T-cell (primary cell): ENCODE measurements at regions of chr10 and their contacts with region 1.

Region 1: GRCh38 chr10:62050893-62051433 is 149.5 kb downstream of the ARID5B start:
- DNase-seq: peak; percentile 18 to 86 (median 73)
- ATAC-seq: peak; percentile 68 to 87 (median 74)
- H3K4me3 ChIP-seq: peak overlapping the region in 1 of 2 donors; percentile 50
- H3K4me3 Mint-ChIP-seq: peak overlapping the region; percentile 90 to 93 (median 91)
- H3K27ac ChIP-seq: peak overlapping the region; percentile 90
- H3K27ac Mint-ChIP-seq: peak overlapping the region; percentile 99 to 100
- H3K4me1 ChIP-seq: peaks cover 48 to 57% of the 10 kb centered on the region in 2 experiments
- H3K4me1 Mint-ChIP-seq: peaks cover 94 to 99% (median 98%) of the 10 kb centered on the region in 3 donors
- H3K27me3 ChIP-seq: no peaks in the 10 kb centered on the region
- H3K27me3 Mint-ChIP-seq: no peaks in the 10 kb centered on the region

Region 2: DNA sequence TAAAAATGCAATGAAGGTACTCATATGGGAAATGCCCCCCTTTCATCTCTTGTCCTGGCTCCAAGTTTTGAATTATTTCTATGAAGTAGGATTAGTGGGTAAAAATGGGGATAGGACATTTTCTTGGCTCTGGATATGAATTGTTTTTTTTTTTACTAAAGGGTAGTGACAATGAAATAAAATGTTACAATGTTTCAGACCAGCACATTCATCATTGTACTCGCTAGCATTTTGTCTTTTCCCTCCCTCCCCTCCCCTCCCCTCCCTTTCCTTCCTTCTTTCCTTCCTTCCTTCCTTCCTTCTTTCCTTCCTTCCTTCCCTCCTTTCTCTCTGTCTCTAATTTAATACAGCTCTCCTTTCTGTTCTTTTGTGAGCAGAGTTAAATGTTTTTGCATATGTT is 1208.3 kb before region 1 on chr10:
- CTCF ChIA-PET with region 1: no interaction called
- POLR2A ChIA-PET with region 1: no interaction called
- DNase-seq: no peak
- ATAC-seq: no peak
- H3K4me3 ChIP-seq: no peak overlapping the region
- H3K4me3 Mint-ChIP-seq: no peak overlapping the region
- H3K27ac ChIP-seq: no peak overlapping the region
- H3K27ac Mint-ChIP-seq: no peak overlapping the region
- H3K4me1 ChIP-seq: no peaks in the 10 kb centered on the region
- H3K4me1 Mint-ChIP-seq: no peaks in the 10 kb centered on the region
- H3K27me3 ChIP-seq: no peaks in the 10 kb centered on the region
- H3K27me3 Mint-ChIP-seq: peaks cover 5 to 6% of the 10 kb centered on the region in 2 donors

Region 3: GRCh38 chr10:61896854-61897661 is 153.9 kb before region 1 on chr10:
- CTCF ChIA-PET with region 1: interaction called, 3 to 12 read pairs
- POLR2A ChIA-PET with region 1: interaction called in 1 of 2 experiments, 19 read pairs
- DNase-seq: peak in 34 of 35 experiments; percentile 2 to 87 (median 38)
- ATAC-seq: peak; percentile 54 to 67 (median 64)
- H3K4me3 ChIP-seq: peak overlapping the region; percentile 29 to 42
- H3K4me3 Mint-ChIP-seq: peak overlapping the region; percentile 76 to 83 (median 81)
- H3K27ac ChIP-seq: no peak overlapping the region
- H3K27ac Mint-ChIP-seq: peak overlapping the region; percentile 87
- H3K4me1 ChIP-seq: peaks cover 10 to 16% of the 10 kb centered on the region in 2 experiments
- H3K4me1 Mint-ChIP-seq: peaks cover 33 to 42% (median 34%) of the 10 kb centered on the region in 3 donors
- H3K27me3 ChIP-seq: no peaks in the 10 kb centered on the region
- H3K27me3 Mint-ChIP-seq: no peaks in the 10 kb centered on the region

Region 4: DNA sequence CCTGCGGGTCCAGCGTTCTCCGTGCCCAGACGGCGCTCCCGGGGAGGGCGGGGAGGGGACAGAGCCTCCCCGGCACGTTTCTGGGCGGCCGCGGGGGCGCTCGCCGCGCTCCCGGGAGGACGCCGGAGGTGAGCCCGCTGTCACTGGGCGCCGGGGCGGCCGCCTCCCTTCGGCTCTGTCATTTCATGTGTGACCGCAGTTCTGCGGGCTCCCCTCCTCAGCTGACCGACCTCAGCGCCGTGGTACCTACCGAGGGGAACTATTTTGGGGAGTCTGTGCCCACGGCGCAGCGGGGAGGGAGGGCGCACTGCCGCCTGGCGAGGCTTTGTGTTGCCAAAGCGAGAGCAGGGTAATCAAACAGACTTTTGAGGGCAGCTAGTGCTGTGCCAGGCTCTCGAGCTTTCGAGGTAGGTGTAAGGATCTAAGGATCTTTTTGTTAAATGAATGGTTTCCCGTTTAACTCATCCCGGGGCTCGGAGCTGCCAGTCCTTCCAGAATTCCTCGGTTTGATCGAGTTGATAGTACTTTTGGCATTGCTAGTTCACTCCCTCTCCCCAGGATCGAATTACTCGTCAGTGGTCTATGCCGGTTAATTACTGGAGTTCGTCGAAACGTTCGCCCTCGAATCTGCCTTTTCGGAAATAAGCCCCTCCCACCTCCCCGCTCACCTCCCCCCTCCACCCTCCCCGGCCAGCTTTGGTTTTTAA is 147.6 kb before region 1 on chr10:
- CTCF ChIA-PET with region 1: interaction called in 1 of 2 experiments, 12 read pairs
- POLR2A ChIA-PET with region 1: interaction called in 1 of 2 experiments, 19 read pairs
- DNase-seq: peak; percentile 41 to 77 (median 61)
- ATAC-seq: peak; percentile 54 to 59 (median 58)
- H3K4me3 ChIP-seq: peak overlapping the region; percentile 92 to 99
- H3K4me3 Mint-ChIP-seq: peak overlapping the region; percentile 80 to 94 (median 87)
- H3K27ac ChIP-seq: peak overlapping the region; percentile 97
- H3K27ac Mint-ChIP-seq: peak overlapping the region; percentile 94 to 95
- H3K4me1 ChIP-seq: peaks cover 10 to 24% of the 10 kb centered on the region in 2 experiments
- H3K4me1 Mint-ChIP-seq: peaks cover 44 to 52% (median 46%) of the 10 kb centered on the region in 3 donors
- H3K27me3 ChIP-seq: no peaks in the 10 kb centered on the region
- H3K27me3 Mint-ChIP-seq: no peaks in the 10 kb centered on the region

Region 5: GRCh38 chr10:61992671-61993668 is 58.0 kb before region 1 on chr10:
- CTCF ChIA-PET with region 1: interaction called, 4 to 9 read pairs
- POLR2A ChIA-PET with region 1: interaction called, 6 to 23 read pairs
- DNase-seq: peak in 33 of 35 experiments; percentile 24 to 82 (median 64)
- ATAC-seq: peak; percentile 74 to 87 (median 80)
- H3K4me3 ChIP-seq: peak overlapping the region in 1 of 2 donors; percentile 14
- H3K4me3 Mint-ChIP-seq: peak overlapping the region; percentile 63 to 82 (median 66)
- H3K27ac ChIP-seq: peak overlapping the region; percentile 85
- H3K27ac Mint-ChIP-seq: peak overlapping the region; percentile 87 to 95
- H3K4me1 ChIP-seq: peaks cover 12 to 13% of the 10 kb centered on the region in 2 experiments
- H3K4me1 Mint-ChIP-seq: peaks cover 58 to 82% (median 78%) of the 10 kb centered on the region in 3 donors
- H3K27me3 ChIP-seq: no peaks in the 10 kb centered on the region
- H3K27me3 Mint-ChIP-seq: no peaks in the 10 kb centered on the region

Region 6: DNA sequence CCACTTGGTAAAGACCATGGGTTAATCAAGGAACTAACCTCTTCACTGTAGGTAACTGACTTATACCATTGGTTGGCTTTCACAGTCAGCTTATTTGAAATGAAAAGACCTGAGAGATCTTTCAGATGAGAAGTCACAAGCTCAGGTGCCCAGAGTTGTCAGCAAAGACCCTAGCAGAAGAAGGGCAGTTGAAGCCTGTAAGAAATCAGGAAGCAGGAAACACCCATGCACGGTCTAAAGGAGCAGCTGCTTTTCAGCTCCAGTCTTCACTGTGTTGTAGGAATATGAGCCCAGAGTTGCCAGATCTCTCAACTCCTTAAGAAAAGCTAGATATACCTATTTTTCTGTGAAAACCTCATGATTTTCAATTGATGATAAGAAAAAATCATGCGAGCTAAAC is 19.5 kb before region 1 on chr10:
- CTCF ChIA-PET with region 1: no interaction called
- POLR2A ChIA-PET with region 1: no interaction called
- DNase-seq: no peak
- ATAC-seq: peak in 1 of 4 experiments; percentile 26
- H3K4me3 ChIP-seq: no peak overlapping the region
- H3K4me3 Mint-ChIP-seq: no peak overlapping the region
- H3K27ac ChIP-seq: no peak overlapping the region
- H3K27ac Mint-ChIP-seq: peak overlapping the region; percentile 60 to 80
- H3K4me1 ChIP-seq: peaks cover 20 to 28% of the 10 kb centered on the region in 2 experiments
- H3K4me1 Mint-ChIP-seq: peaks cover 69 to 84% (median 80%) of the 10 kb centered on the region in 3 donors
- H3K27me3 ChIP-seq: no peaks in the 10 kb centered on the region
- H3K27me3 Mint-ChIP-seq: no peaks in the 10 kb centered on the region

Region 7: DNA sequence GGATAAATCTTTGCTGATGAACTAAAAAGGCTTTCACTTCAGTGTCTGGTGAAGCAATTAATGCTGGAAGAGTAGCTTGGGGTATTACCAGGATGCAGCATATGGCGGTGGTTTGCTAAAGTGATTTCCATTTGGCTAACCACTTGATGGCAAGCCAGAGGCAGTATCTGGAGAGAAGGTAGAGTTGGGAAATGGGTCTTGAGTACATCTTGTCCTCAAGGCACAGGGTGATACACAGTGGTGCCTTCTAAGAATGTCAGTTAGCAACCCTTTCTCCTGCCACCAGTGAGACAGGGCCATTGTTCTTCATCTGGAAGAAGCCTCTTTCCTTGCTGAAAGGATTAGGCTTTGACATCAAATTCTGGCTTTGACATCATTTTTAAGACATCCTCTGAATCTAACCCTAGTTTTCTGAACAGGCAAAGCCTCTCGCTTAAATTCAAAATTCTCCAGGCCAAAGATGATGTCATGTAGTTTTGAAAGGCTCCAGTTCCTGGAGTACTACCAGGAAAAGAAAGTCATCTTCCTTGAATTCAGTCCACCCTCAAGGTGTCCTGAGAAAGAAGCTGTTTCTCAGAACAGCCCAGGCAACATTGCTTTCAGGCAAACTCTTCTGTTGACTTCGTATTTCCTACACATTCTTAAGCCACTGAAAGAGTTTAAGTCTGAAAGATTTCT is 13.0 kb after region 1 on chr10:
- CTCF ChIA-PET with region 1: interaction called in 1 of 2 experiments, 4 read pairs
- POLR2A ChIA-PET with region 1: interaction called, 4 to 20 read pairs
- DNase-seq: no peak
- ATAC-seq: no peak
- H3K4me3 ChIP-seq: no peak overlapping the region
- H3K4me3 Mint-ChIP-seq: no peak overlapping the region
- H3K27ac ChIP-seq: no peak overlapping the region
- H3K27ac Mint-ChIP-seq: peak overlapping the region; percentile 36 to 72
- H3K4me1 ChIP-seq: peaks cover 2 to 4% of the 10 kb centered on the region in 2 experiments
- H3K4me1 Mint-ChIP-seq: peaks cover 42 to 79% (median 75%) of the 10 kb centered on the region in 3 donors
- H3K27me3 ChIP-seq: no peaks in the 10 kb centered on the region
- H3K27me3 Mint-ChIP-seq: no peaks in the 10 kb centered on the region

Region 8: GRCh38 chr10:62183442-62183841 is 132.5 kb after region 1 on chr10:
- CTCF ChIA-PET with region 1: interaction called in 1 of 2 experiments, 3 read pairs
- POLR2A ChIA-PET with region 1: interaction called, 6 to 14 read pairs
- DNase-seq: peak in 29 of 35 experiments; percentile 7 to 86 (median 47)
- ATAC-seq: peak; percentile 89 to 94 (median 93)
- H3K4me3 ChIP-seq: no peak overlapping the region
- H3K4me3 Mint-ChIP-seq: peak overlapping the region in 2 of 3 donors; percentile 11 to 74
- H3K27ac ChIP-seq: peak overlapping the region; percentile 50
- H3K27ac Mint-ChIP-seq: peak overlapping the region; percentile 93 to 94
- H3K4me1 ChIP-seq: peaks cover 41 to 50% of the 10 kb centered on the region in 2 experiments
- H3K4me1 Mint-ChIP-seq: peaks cover 80 to 86% (median 84%) of the 10 kb centered on the region in 3 donors
- H3K27me3 ChIP-seq: no peaks in the 10 kb centered on the region
- H3K27me3 Mint-ChIP-seq: no peaks in the 10 kb centered on the region

Region 9: DNA sequence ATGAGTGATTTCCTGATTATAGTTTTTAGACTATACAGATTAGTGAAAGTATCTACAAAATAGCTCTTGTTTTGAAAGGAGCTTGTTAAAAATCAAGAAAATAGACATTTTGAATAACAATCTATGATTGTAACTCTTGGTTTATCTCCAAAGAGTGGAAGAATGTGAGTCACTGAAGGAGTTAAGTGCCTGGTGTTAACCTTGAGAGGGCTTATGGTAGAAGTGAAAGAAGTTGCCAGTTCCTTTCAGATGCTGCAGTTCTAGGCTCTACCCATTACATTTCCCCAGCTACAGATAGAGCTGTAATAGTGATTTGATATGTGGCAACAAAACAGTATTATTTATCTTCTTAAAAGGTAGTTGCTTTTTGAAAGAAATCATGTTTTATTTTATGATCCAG is 1094.8 kb after region 1 on chr10:
- CTCF ChIA-PET with region 1: no interaction called
- POLR2A ChIA-PET with region 1: interaction called in 1 of 2 experiments, 11 read pairs
- DNase-seq: no peak
- ATAC-seq: no peak
- H3K4me3 ChIP-seq: no peak overlapping the region
- H3K4me3 Mint-ChIP-seq: no peak overlapping the region
- H3K27ac ChIP-seq: no peak overlapping the region
- H3K27ac Mint-ChIP-seq: no peak overlapping the region
- H3K4me1 ChIP-seq: peaks cover 0 to 11% of the 10 kb centered on the region in 2 experiments
- H3K4me1 Mint-ChIP-seq: peaks cover 59 to 68% (median 60%) of the 10 kb centered on the region in 3 donors
- H3K27me3 ChIP-seq: no peaks in the 10 kb centered on the region
- H3K27me3 Mint-ChIP-seq: no peaks in the 10 kb centered on the region